ENCODE measurements at regions of chr5 and their contacts with region 1.

Region 1: DNA sequence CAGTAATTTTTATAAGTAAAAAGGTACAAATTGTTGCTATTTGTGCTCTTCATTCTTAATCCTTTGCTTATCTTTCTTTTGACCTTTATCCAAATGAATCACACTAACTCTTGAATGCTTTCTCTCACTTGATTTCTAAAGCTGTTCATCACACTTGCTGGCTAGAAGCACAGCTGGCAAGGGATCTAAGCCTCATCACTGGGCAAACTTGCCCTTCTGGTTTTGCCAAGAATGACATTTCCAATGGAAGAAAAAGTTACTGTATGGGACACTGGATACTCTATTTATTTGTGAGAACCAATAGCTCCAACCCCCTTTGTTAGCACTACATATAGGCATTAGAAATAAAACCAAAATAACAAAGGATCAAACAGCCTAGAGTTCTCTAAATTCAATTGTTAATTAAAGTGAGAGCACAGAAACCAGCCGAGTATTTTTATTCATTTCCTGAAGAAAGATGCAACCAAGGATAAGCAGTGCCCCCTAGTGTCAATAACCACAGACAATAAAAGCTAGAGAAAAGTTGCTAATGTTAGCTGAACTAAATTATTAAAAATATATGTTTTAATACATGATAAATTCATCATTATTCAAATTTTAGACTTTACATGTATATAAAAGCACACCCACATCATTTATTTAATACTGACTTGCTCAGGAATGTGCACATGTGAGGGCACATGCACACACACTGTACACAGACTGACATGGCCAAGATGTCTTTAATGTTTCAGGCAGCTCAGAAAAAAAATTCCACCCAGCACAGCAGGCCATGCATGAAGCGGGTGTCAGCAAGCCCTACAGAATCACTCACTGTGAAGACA is 59.8 kb upstream of the POU5F2 start:
- DNase-seq: no peak
- H3K4me3 ChIP-seq: peak overlapping the region in 2 of 4 donors; percentile 18 to 28
- H3K27ac ChIP-seq: peak overlapping the region in 2 of 4 donors; percentile 53 to 65
- H3K4me1 ChIP-seq: peaks cover 3 to 17% (median 5%) of the 10 kb centered on the region in 3 donors
- H3K27me3 ChIP-seq: no peaks in the 10 kb centered on the region
- CTCF ChIP-seq: peak in 5 of 6 experiments; percentile 39 to 83 (median 71)
- POLR2A ChIP-seq: no peak

Region 2: GRCh38 chr5:93582677-93583438 is 218.3 kb before region 1 on chr5 and contains the start of gene NR2F1:
- intact Hi-C with region 1: loop called (anchors 10 kb)
- DNase-seq: no peak
- H3K4me3 ChIP-seq: peak within 1 kb of the TSS; percentile 51 to 76 (median 57)
- H3K27ac ChIP-seq: peak within 1 kb of the TSS; percentile 66 to 91 (median 80)
- H3K4me1 ChIP-seq: peaks cover 14 to 64% (median 18%) of the 10 kb centered on the region in 3 donors
- H3K27me3 ChIP-seq: peaks cover 8 to 98% (median 15%) of the 10 kb centered on the region in 4 donors
- CTCF ChIP-seq: peak in 4 of 6 experiments; percentile 31 to 96 (median 76)
- POLR2A ChIP-seq: peak in 2 of 4 donors; percentile 10 to 43
- total RNA-seq, gene NR2F1: 1.9 to 26.3 (median 3.7) TPM

Region 3: GRCh38 chr5:94045839-94046782 is 244.9 kb after region 1 on chr5:
- intact Hi-C with region 1: no loop called
- DNase-seq: no peak
- H3K4me3 ChIP-seq: no peak overlapping the region
- H3K27ac ChIP-seq: no peak overlapping the region
- H3K4me1 ChIP-seq: peaks cover 0 to 7% (median 0%) of the 10 kb centered on the region in 3 donors
- H3K27me3 ChIP-seq: no peaks in the 10 kb centered on the region
- CTCF ChIP-seq: no peak
- POLR2A ChIP-seq: no peak

Measured in esophagus squamous epithelium (tissue), 5 donors.